ENCODE measurements at regions of chr9 and their contacts with region 1.

Region 1: GRCh38 chr9:90025816-90026215 is 421.0 kb downstream of the GADD45G start:
- DNase-seq: no peak
- ATAC-seq: no peak
- H3K4me3 Mint-ChIP-seq: no peak overlapping the region
- H3K27ac Mint-ChIP-seq: no peak overlapping the region
- H3K4me1 Mint-ChIP-seq: peaks cover 60% of the 10 kb centered on the region
- H3K27me3 Mint-ChIP-seq: no peaks in the 10 kb centered on the region
- CTCF ChIP-seq: no peak

Region 2: GRCh38 chr9:90007516-90008440 is 18.0 kb before region 1 on chr9:
- CTCF ChIA-PET with region 1: interaction called, 4 read pairs
- POLR2A ChIA-PET with region 1: interaction called, 3 read pairs
- intact Hi-C with region 1: loop called (anchors 2 kb)
- DNase-seq: no peak
- ATAC-seq: no peak
- H3K4me3 Mint-ChIP-seq: peak overlapping the region; percentile 6
- H3K27ac Mint-ChIP-seq: peak overlapping the region; percentile 30
- H3K4me1 Mint-ChIP-seq: peaks cover 35% of the 10 kb centered on the region
- H3K27me3 Mint-ChIP-seq: no peaks in the 10 kb centered on the region
- CTCF ChIP-seq: no peak

Measured in activated B cell treated with CpG ODN at 0.5 μM for 24 hours (primary cell).